ENCODE measurements at regions of chr11 and their contacts with region 1.

Region 1: DNA sequence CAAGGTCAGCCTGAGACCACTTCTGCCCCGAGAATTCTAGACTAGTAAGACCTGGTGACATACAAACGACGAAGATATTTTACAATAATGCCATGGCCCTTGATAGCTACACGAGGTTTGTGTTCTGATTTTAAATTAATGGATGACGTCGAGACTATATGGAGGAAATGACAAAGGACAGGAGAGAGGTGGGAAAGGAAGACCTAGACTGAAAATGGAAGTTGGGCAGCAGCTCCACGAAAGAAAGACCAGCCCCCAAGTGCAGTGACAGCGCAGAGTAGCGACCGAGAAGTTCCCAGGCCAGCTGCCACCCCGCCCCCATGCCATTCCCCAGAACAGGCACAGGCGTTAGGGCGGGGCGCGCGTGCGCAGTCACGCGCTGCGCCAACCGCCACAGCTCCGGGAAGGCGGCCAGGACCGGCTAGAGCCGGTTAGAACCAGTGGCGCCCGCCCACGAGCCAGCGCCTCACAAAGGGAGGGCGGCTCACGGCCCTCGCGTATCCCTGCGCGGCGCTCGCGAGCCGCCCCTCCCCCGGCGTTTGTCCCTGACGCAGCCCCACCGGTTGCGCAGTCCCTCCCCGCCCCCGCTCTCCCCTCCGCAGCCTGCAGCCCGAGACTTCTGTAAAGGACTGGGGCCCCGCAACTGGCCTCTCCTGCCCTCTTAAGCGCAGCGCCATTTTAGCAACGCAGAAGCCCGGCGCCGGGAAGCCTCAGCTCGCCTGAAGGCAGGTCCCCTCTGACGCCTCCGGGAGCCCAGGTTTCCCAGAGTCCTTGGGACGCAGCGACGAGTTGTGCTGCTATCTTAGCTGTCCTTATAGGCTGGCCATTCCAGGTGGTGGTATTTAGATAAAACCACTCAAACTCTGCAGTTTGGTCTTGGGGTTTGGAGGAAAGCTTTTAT is 1.5 kb upstream of the MALAT1 start:
- DNase-seq: peak; percentile 98
- ATAC-seq: peak; percentile 76
- H3K4me3 Mint-ChIP-seq: no peak overlapping the region
- H3K27ac Mint-ChIP-seq: no peak overlapping the region
- H3K4me1 Mint-ChIP-seq: peaks cover 35% of the 10 kb centered on the region
- H3K27me3 Mint-ChIP-seq: no peaks in the 10 kb centered on the region

Region 2: DNA sequence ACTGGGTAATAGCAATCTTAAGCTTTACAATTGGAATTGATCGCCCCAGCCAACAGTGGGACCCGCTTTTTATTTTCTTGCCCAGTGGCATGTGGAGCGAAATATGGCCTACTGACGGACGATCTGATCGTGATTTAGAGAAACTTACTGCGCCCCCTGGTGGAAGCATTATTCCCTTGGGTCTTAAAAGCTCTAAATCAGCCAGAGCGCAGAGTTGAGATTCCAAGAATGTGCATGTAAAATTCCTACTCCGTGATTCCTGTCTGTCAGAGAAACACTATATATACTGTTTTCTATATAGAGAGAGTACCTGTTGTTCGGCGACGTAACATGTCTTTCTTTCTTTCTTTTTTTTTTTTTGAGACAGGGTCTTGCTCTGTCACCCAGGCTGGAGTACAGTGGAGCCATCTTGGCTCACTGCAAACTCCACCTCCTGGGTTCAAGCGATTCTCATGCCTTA is 167.4 kb before region 1 on chr11:
- CTCF ChIA-PET with region 1: interaction called, 3 read pairs
- POLR2A ChIA-PET with region 1: interaction called, 14 read pairs
- DNase-seq: peak; percentile 92
- ATAC-seq: no peak
- H3K4me3 Mint-ChIP-seq: no peak overlapping the region
- H3K27ac Mint-ChIP-seq: no peak overlapping the region
- H3K4me1 Mint-ChIP-seq: peaks cover 16% of the 10 kb centered on the region
- H3K27me3 Mint-ChIP-seq: peaks cover 4% of the 10 kb centered on the region

Region 3: GRCh38 chr11:65418711-65419459 is 78.5 kb before region 1 on chr11:
- CTCF ChIA-PET with region 1: interaction called, 538 read pairs
- POLR2A ChIA-PET with region 1: interaction called, 4,167 read pairs
- DNase-seq: peak; percentile 95
- ATAC-seq: peak; percentile 29
- H3K4me3 Mint-ChIP-seq: peak overlapping the region; percentile 87
- H3K27ac Mint-ChIP-seq: peak overlapping the region; percentile 100
- H3K4me1 Mint-ChIP-seq: peaks cover 60% of the 10 kb centered on the region
- H3K27me3 Mint-ChIP-seq: peaks cover 2% of the 10 kb centered on the region

Region 4: GRCh38 chr11:65477149-65477965 is 20.0 kb before region 1 on chr11:
- CTCF ChIA-PET with region 1: interaction called, 113 read pairs
- POLR2A ChIA-PET with region 1: interaction called, 794 read pairs
- DNase-seq: peak; percentile 90
- ATAC-seq: peak; percentile 84
- H3K4me3 Mint-ChIP-seq: peak overlapping the region; percentile 98
- H3K27ac Mint-ChIP-seq: peak overlapping the region; percentile 100
- H3K4me1 Mint-ChIP-seq: peaks cover 16% of the 10 kb centered on the region
- H3K27me3 Mint-ChIP-seq: peaks cover 4% of the 10 kb centered on the region

Region 5: DNA sequence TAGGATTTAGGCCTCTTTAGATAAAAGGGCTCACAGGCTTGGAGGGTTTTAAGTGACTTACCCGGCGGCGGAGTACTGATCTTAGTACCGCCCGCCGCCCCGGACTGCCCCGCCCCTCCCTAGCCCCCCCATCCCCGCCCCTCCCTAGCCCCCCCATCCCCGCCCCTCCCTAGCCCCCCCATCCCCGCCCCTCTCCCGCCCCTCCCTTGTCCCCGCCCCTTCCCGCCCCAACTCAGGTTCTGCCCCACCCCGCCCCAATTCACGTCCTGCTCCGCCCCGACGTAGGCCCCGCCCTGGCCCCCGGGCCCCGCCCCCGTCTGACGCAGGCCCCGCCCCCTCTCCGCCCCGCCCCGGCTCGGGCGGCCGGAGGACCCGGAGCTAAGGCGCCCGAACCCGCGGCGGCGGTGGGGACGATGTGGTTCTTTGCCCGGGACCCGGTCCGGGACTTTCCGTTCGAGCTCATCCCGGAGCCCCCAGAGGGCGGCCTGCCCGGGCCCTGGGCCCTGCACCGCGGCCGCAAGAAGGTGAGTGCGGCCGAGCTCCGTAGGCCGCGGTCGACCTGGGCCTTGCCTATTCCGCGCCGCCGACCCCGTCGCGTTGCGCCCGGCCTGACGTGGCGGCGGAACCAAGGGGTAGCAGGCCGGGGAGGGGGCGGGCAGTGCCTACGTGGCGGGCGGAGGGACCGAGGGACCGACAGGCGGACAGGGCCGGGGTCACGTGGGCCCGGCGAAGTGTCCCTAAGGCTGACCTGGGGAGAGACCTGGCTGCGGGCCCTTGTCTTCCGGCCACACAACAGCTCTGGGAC is 27.6 kb after region 1 on chr11 and contains the start of gene SCYL1:
- CTCF ChIA-PET with region 1: no interaction called
- POLR2A ChIA-PET with region 1: interaction called, 25 read pairs
- DNase-seq: peak; percentile 84
- ATAC-seq: peak; percentile 79
- H3K4me3 Mint-ChIP-seq: peak within 1 kb of the TSS; percentile 83
- H3K27ac Mint-ChIP-seq: peak within 1 kb of the TSS; percentile 89
- H3K4me1 Mint-ChIP-seq: peaks cover 62% of the 10 kb centered on the region
- H3K27me3 Mint-ChIP-seq: no peaks in the 10 kb centered on the region
- total RNA-seq, gene SCYL1: 68.0 to 69.5 TPM

Region 6: DNA sequence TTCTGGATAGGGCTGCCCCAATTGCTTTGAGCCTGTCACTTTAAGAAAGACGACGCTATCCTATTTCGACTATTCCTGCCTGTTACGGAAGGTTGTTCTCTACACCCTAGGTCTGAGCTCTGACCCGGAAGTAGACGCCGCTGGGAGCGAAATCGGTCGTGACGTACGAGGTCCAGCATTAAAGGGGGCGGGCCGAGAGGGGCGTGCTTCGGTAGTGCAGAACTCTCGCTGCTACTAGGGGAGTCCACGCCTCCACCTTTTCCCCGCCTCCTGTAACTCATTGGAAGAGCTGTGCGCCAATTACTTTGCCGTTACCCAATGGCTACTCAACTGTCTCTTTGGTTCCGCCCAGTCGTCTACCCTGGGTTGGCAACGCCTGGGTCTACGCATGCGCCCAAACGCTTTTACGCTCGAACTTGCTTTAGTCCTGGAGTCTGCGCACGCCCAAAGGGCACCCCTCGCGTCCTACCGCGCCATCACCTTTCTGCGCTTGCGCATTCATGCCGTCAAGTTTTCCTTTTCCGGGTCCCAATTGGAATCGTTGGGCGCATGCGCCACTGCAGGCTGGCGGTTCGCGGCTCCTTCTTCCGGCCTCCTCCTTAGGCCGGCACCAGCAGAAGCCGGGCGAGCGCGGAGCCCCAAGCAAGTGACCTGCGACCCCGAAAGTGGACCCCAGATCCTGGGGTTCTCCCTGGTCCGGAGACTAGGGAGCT is 118.0 kb after region 1 on chr11 and contains the start of gene PCNX3:
- CTCF ChIA-PET with region 1: no interaction called
- POLR2A ChIA-PET with region 1: interaction called, 12 read pairs
- DNase-seq: peak; percentile 100
- ATAC-seq: peak; percentile 91
- H3K4me3 Mint-ChIP-seq: peak within 1 kb of the TSS; percentile 98
- H3K27ac Mint-ChIP-seq: peak within 1 kb of the TSS; percentile 97
- H3K4me1 Mint-ChIP-seq: peaks cover 44% of the 10 kb centered on the region
- H3K27me3 Mint-ChIP-seq: no peaks in the 10 kb centered on the region
- total RNA-seq, gene PCNX3: 50.1 to 54.8 TPM